Mammary epithelial cell (primary cell): ENCODE measurements at regions of chr9 and their contacts with region 1.

Region 1: DNA sequence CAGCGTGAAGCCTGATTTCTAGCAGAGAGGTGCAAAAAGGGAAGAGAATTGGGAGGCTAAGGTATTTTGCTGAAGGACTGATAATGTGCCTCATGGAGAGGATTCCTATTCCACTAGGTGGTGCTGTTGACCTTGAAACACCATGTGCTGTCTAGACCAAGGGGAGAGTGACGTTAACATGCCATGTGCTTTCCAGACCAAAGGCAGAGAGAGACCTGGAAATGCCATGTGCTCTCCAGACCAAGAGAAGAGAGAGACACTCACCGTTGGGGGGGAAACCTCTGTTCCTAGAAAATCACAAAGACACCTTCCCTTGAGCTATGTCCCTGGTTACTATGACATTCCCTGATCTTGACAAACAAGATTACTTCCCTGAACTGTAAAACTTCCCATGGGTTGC is 286.0 kb upstream of the TUSC1 start:
- DNase-seq: peak; percentile 59
- H3K4me3 ChIP-seq: no peak overlapping the region
- H3K27ac ChIP-seq: no peak overlapping the region
- H3K4me1 ChIP-seq: no peaks in the 10 kb centered on the region
- H3K27me3 ChIP-seq: no peaks in the 10 kb centered on the region
- CTCF ChIP-seq: peak; percentile 52 to 75

Region 2: GRCh38 chr9:25857147-25857546 is 107.1 kb before region 1 on chr9:
- CTCF ChIA-PET with region 1: no interaction called
- dilution Hi-C with region 1: no loop called
- in situ Hi-C with region 1: no loop called
- intact Hi-C with region 1: no loop called
- DNase-seq: no peak
- H3K4me3 ChIP-seq: no peak overlapping the region
- H3K27ac ChIP-seq: no peak overlapping the region
- H3K4me1 ChIP-seq: no peaks in the 10 kb centered on the region
- H3K27me3 ChIP-seq: no peaks in the 10 kb centered on the region
- CTCF ChIP-seq: no peak

Region 3: DNA sequence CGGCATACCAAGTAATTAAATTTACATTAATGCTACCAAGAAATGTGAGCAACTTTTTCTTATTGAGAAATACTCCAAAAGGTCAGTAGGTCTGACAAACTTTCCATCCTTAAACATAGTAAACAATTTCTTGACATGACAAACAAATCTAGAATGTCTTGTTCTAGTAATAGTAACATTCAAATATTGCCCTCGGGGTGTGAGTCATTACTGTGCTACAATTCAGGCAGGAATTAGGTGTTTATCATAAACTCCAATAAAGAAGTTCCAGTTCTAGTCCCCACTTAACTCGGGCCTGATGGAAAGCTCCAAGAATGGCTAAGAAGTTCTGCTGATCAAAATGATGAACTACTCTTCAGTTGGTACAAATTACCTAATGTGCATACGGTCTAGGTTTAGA is 50.4 kb before region 1 on chr9:
- CTCF ChIA-PET with region 1: no interaction called
- dilution Hi-C with region 1: no loop called
- in situ Hi-C with region 1: no loop called
- intact Hi-C with region 1: no loop called
- DNase-seq: no peak
- H3K4me3 ChIP-seq: no peak overlapping the region
- H3K27ac ChIP-seq: no peak overlapping the region
- H3K4me1 ChIP-seq: no peaks in the 10 kb centered on the region
- H3K27me3 ChIP-seq: no peaks in the 10 kb centered on the region
- CTCF ChIP-seq: no peak

Region 4: GRCh38 chr9:26326473-26327044 is 362.3 kb after region 1 on chr9:
- CTCF ChIA-PET with region 1: no interaction called
- dilution Hi-C with region 1: no loop called
- in situ Hi-C with region 1: loop called (anchors 5 kb)
- intact Hi-C with region 1: loop called (anchors 1 kb)
- DNase-seq: peak; percentile 40
- H3K4me3 ChIP-seq: no peak overlapping the region
- H3K27ac ChIP-seq: no peak overlapping the region
- H3K4me1 ChIP-seq: no peaks in the 10 kb centered on the region
- H3K27me3 ChIP-seq: peaks cover 1% of the 10 kb centered on the region
- CTCF ChIP-seq: peak; percentile 83 to 91

Region 5: DNA sequence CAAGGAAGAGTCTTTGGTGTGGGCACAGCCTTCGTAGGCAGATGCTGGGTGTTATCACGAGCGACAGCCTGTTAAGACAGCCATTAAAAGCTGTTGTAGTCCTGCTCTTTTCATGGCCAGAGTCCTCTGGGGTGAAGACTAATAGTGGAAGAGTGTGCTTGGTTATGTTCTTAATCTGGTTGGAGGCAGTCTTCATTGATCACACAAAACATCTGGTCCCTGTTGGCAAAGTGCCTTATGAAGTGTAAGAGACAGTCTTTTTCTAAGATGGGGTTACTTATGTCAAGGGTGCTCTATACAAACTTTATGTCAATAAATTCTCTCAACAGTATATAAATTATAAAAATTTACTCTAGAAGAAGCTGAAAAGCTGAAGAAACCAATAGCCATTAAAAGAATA is 648.0 kb after region 1 on chr9:
- CTCF ChIA-PET with region 1: no interaction called
- dilution Hi-C with region 1: no loop called
- in situ Hi-C with region 1: no loop called
- intact Hi-C with region 1: loop called (anchors 5 kb)
- DNase-seq: no peak
- H3K4me3 ChIP-seq: no peak overlapping the region
- H3K27ac ChIP-seq: no peak overlapping the region
- H3K4me1 ChIP-seq: no peaks in the 10 kb centered on the region
- H3K27me3 ChIP-seq: no peaks in the 10 kb centered on the region
- CTCF ChIP-seq: no peak

Region 6: GRCh38 chr9:26656003-26656870 is 692.0 kb after region 1 on chr9:
- CTCF ChIA-PET with region 1: no interaction called
- dilution Hi-C with region 1: no loop called
- in situ Hi-C with region 1: no loop called
- intact Hi-C with region 1: loop called (anchors 5 kb)
- DNase-seq: no peak
- H3K4me3 ChIP-seq: peak overlapping the region in 2 of 3 experiments; percentile 8 to 20
- H3K27ac ChIP-seq: no peak overlapping the region
- H3K4me1 ChIP-seq: no peaks in the 10 kb centered on the region
- H3K27me3 ChIP-seq: peaks cover 3% of the 10 kb centered on the region
- CTCF ChIP-seq: peak; percentile 38 to 59

Region 7: GRCh38 chr9:26856413-26857032 is 892.3 kb after region 1 on chr9:
- CTCF ChIA-PET with region 1: no interaction called
- dilution Hi-C with region 1: no loop called
- in situ Hi-C with region 1: no loop called
- intact Hi-C with region 1: loop called (anchors 10 kb)
- DNase-seq: peak; percentile 55
- H3K4me3 ChIP-seq: no peak overlapping the region
- H3K27ac ChIP-seq: no peak overlapping the region
- H3K4me1 ChIP-seq: no peaks in the 10 kb centered on the region
- H3K27me3 ChIP-seq: no peaks in the 10 kb centered on the region
- CTCF ChIP-seq: peak; percentile 84 to 89